ENCODE measurements at regions of chr11 and their contacts with region 1.

Region 1: GRCh38 chr11:34266090-34266912 is 91.5 kb downstream of the ABTB2 start:
- DNase-seq: peak; percentile 70 to 80
- H3K4me3 ChIP-seq: no peak overlapping the region
- H3K27ac ChIP-seq: peak overlapping the region; percentile 60 to 69
- H3K4me1 ChIP-seq: peaks cover 0 to 57% (median 33%) of the 10 kb centered on the region in 4 donors
- H3K27me3 ChIP-seq: no peaks in the 10 kb centered on the region
- CTCF ChIP-seq: no peak

Region 2: GRCh38 chr11:34344768-34345539 is 78.7 kb after region 1 on chr11:
- intact Hi-C with region 1: loop called (anchors 5 kb)
- DNase-seq: peak in 1 of 2 donors; percentile 40
- H3K4me3 ChIP-seq: no peak overlapping the region
- H3K27ac ChIP-seq: peak overlapping the region; percentile 81 to 90
- H3K4me1 ChIP-seq: peaks cover 0 to 99% (median 56%) of the 10 kb centered on the region in 4 donors
- H3K27me3 ChIP-seq: no peaks in the 10 kb centered on the region
- CTCF ChIP-seq: no peak